Spleen (tissue), 13 donors: ENCODE measurements at regions of chr12 and their contacts with region 1.

Region 1: GRCh38 chr12:11202811-11203210 is 16.1 kb upstream of the TAS2R42 start:
- DNase-seq: no peak
- H3K4me3 ChIP-seq: no peak overlapping the region
- H3K27ac ChIP-seq: no peak overlapping the region
- H3K4me1 ChIP-seq: no peaks in the 10 kb centered on the region
- H3K27me3 ChIP-seq: no peaks in the 10 kb centered on the region
- CTCF ChIP-seq: no peak
- POLR2A ChIP-seq: no peak

Region 2: DNA sequence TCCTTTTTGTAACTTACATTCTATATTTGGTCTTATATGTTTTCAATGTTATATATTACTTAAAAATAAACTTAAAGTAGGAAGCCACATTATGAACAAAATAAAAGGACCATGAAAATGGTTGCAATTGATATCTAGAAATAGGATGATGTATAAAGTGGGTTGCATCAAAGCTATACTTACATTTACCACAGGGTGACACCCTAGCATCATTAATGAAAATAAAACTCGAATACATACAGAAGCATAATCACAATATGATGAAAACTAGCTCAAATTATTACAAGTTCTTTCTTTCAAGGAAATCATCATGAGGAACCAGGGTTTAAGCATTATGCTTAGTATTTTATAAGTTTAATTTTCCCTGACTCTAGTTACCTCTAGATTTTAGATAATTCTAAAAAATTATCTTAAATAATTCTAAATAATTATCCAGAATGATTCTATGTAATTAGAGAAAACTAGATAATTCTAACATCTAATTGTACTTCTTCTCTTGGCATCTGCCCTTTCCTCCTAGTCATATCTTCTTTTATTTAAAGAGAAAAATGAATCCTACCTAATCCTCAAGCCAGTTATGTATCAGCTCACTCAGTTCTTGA is 431.6 kb before region 1 on chr12:
- intact Hi-C with region 1: loop called (anchors 5 kb)
- DNase-seq: no peak
- H3K4me3 ChIP-seq: no peak overlapping the region
- H3K27ac ChIP-seq: no peak overlapping the region
- H3K4me1 ChIP-seq: no peaks in the 10 kb centered on the region
- H3K27me3 ChIP-seq: peaks cover 0 to 52% (median 2%) of the 10 kb centered on the region in 7 donors
- CTCF ChIP-seq: peak; percentile 52 to 82 (median 67)
- POLR2A ChIP-seq: no peak

Region 3: GRCh38 chr12:11307143-11307542 is 104.3 kb after region 1 on chr12:
- intact Hi-C with region 1: no loop called
- DNase-seq: no peak
- H3K4me3 ChIP-seq: no peak overlapping the region
- H3K27ac ChIP-seq: no peak overlapping the region
- H3K4me1 ChIP-seq: no peaks in the 10 kb centered on the region
- H3K27me3 ChIP-seq: no peaks in the 10 kb centered on the region
- CTCF ChIP-seq: no peak
- POLR2A ChIP-seq: no peak

Region 4: GRCh38 chr12:11622876-11623281 is 420.1 kb after region 1 on chr12:
- intact Hi-C with region 1: no loop called
- DNase-seq: no peak
- H3K4me3 ChIP-seq: no peak overlapping the region
- H3K27ac ChIP-seq: no peak overlapping the region
- H3K4me1 ChIP-seq: peaks cover 0 to 20% (median 4%) of the 10 kb centered on the region in 6 donors
- H3K27me3 ChIP-seq: no peaks in the 10 kb centered on the region
- CTCF ChIP-seq: no peak
- POLR2A ChIP-seq: no peak